ENCODE measurements at regions of chr1 and their contacts with region 1.

Region 1: GRCh38 chr1:201123866-201124265 is 3.1 kb downstream of the ASCL5 start:
- DNase-seq: no peak
- H3K4me3 ChIP-seq: no peak overlapping the region
- H3K27ac ChIP-seq: no peak overlapping the region
- H3K4me1 ChIP-seq: peaks cover 0 to 2% (median 0%) of the 10 kb centered on the region in 4 donors
- H3K27me3 ChIP-seq: peaks cover 21% of the 10 kb centered on the region
- CTCF ChIP-seq: no peak
- EP300 ChIP-seq: no peak
- POLR2A ChIP-seq: no peak

Region 2: GRCh38 chr1:201170533-201171062 is 46.7 kb after region 1 on chr1:
- in situ Hi-C with region 1: no loop called
- intact Hi-C with region 1: loop called (anchors 1 kb)
- DNase-seq: peak; percentile 97
- H3K4me3 ChIP-seq: peak overlapping the region; percentile 36 to 60 (median 47)
- H3K27ac ChIP-seq: peak overlapping the region; percentile 90 to 93 (median 90)
- H3K4me1 ChIP-seq: peaks cover 0 to 10% (median 6%) of the 10 kb centered on the region in 4 donors
- H3K27me3 ChIP-seq: no peaks in the 10 kb centered on the region
- CTCF ChIP-seq: peak in 1 of 5 experiments; percentile 66
- EP300 ChIP-seq: no peak
- POLR2A ChIP-seq: peak; percentile 89

Region 3: GRCh38 chr1:201184307-201185122 is 60.6 kb after region 1 on chr1:
- in situ Hi-C with region 1: no loop called
- intact Hi-C with region 1: no loop called
- DNase-seq: peak; percentile 25
- H3K4me3 ChIP-seq: no peak overlapping the region
- H3K27ac ChIP-seq: no peak overlapping the region
- H3K4me1 ChIP-seq: peaks cover 0 to 5% (median 0%) of the 10 kb centered on the region in 4 donors
- H3K27me3 ChIP-seq: no peaks in the 10 kb centered on the region
- CTCF ChIP-seq: peak; percentile 44 to 55 (median 50)
- EP300 ChIP-seq: no peak
- POLR2A ChIP-seq: no peak

Measured in transverse colon (tissue), 4 donors.